ENCODE measurements at regions of chr2 and their contacts with region 1.

Region 1: DNA sequence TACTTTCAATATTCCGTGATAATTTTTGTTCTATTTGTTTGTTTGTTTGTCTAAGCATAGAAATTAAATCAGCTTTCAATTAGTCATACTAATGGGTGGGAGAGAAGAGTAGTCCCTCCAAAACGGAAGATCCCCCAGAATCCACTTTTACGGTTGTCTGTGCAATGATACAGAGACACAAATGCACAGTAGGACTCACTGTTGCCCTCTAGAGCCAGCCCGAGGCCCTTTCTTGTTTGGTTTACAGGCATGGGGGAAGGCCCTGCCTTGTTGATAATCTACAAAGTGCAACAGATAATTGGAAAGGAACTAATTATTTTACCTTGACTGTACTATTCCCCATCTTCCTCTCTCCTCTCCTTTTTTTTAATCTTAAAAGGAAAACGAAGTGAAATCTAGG is 121.1 kb downstream of the ACOXL start:
- DNase-seq: no peak
- H3K4me3 ChIP-seq: no peak overlapping the region
- H3K27ac ChIP-seq: no peak overlapping the region
- H3K27me3 ChIP-seq: peaks cover 12% of the 10 kb centered on the region
- CTCF ChIP-seq: peak; percentile 62

Region 2: DNA sequence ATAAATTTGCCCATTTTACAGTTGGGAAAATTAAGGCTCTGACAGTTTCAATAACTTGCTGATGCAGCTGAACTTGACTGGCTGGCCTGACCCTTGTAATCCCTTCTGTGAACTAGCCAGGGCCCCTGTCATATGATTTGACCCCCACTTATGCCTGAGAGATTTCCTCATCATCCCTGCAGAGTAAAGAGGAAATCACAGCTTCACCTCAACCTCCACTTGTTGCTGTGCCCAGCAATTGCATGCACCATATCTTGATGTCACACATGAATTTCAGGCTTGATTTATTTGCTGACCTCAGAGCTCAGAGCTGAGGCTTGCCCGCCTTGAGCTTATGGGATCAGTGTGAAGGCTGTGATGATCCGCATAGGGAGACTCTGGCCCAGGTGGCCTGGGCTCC is 13.0 kb before region 1 on chr2:
- CTCF ChIA-PET with region 1: interaction called, 11 read pairs
- POLR2A ChIA-PET with region 1: no interaction called
- DNase-seq: no peak
- H3K4me3 ChIP-seq: no peak overlapping the region
- H3K27ac ChIP-seq: no peak overlapping the region
- H3K27me3 ChIP-seq: peaks cover 20% of the 10 kb centered on the region
- CTCF ChIP-seq: no peak